Activated CD4-positive, alpha-beta T cell treated with anti-CD3 and anti-CD28 coated beads for 36 hours (primary cell): ENCODE measurements at regions of chrX and their contacts with region 1.

Region 1: DNA sequence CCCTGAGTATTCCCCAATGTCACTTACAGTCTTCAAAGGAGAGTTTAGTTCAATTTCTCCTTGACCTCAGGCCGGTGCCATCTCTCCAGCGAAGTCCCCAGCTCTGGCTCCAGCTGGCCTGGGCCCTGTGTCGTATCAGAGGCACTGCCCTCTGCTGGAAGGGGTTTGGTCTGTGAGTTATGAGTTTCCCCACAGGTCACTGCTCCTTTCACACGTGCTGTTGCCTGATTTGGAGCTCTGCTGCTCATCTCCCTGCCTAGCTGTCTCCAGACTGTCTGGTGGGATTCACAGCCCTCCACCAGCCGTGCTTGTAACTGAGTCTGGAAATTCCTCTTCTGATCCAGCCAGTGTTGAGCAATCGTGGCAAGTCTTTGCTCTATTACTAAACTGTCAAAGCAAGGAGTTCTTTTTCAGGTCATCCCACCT is at the start of gene RAP2C:
- DNase-seq: peak; percentile 76
- ATAC-seq: peak; percentile 33
- H3K4me3 Mint-ChIP-seq: peak within 1 kb of the TSS; percentile 87
- H3K27ac Mint-ChIP-seq: peak within 1 kb of the TSS; percentile 92
- H3K4me1 Mint-ChIP-seq: peaks cover 13% of the 10 kb centered on the region
- H3K27me3 Mint-ChIP-seq: no peaks in the 10 kb centered on the region
- total RNA-seq, gene RAP2C: 28.3 to 31.3 TPM

Region 2: DNA sequence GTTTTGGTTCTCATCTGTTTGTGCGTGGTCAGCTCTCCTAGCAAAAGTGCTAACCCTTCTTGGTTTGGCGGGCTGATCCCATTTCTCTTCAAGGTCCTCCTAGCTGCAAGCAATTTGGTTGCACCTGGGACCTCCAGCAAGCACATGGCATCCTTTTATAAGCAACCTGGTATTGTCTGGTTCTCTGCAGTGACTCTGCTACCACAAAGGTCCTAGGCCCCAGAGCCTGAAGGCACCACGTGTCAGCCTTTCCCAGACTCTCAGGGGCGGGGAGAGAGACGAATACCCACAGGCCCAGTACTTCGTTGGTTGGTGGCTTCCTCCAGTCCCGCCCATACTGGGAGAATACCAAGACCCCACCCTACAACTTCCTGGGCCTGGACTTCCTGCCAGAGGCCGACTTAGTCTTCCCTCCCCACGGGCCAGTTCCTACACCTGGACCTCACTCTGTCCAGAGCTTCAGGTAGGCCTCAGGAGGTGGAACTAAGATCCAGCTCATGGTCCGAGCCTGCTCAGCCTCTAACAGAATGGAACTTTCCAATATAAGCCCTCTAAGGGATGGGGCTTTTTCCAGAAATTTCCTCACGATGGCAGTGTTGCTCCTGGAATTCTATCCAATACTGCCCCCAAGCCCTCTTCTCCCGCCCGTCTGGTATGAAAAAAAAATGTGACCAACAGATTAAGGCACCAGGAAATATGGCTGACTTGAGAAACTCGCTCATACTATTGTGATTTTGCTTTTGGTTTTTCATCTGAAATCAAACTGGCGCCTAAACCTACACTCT is 388.8 kb before region 1 on chrX:
- CTCF ChIA-PET with region 1: interaction called, 7 read pairs
- POLR2A ChIA-PET with region 1: no interaction called
- intact Hi-C with region 1: loop called (anchors 1 to 5 kb)
- DNase-seq: peak; percentile 76
- ATAC-seq: peak; percentile 89
- H3K4me3 Mint-ChIP-seq: peak overlapping the region; percentile 80
- H3K27ac Mint-ChIP-seq: peak overlapping the region; percentile 86
- H3K4me1 Mint-ChIP-seq: peaks cover 25% of the 10 kb centered on the region
- H3K27me3 Mint-ChIP-seq: no peaks in the 10 kb centered on the region

Region 3: DNA sequence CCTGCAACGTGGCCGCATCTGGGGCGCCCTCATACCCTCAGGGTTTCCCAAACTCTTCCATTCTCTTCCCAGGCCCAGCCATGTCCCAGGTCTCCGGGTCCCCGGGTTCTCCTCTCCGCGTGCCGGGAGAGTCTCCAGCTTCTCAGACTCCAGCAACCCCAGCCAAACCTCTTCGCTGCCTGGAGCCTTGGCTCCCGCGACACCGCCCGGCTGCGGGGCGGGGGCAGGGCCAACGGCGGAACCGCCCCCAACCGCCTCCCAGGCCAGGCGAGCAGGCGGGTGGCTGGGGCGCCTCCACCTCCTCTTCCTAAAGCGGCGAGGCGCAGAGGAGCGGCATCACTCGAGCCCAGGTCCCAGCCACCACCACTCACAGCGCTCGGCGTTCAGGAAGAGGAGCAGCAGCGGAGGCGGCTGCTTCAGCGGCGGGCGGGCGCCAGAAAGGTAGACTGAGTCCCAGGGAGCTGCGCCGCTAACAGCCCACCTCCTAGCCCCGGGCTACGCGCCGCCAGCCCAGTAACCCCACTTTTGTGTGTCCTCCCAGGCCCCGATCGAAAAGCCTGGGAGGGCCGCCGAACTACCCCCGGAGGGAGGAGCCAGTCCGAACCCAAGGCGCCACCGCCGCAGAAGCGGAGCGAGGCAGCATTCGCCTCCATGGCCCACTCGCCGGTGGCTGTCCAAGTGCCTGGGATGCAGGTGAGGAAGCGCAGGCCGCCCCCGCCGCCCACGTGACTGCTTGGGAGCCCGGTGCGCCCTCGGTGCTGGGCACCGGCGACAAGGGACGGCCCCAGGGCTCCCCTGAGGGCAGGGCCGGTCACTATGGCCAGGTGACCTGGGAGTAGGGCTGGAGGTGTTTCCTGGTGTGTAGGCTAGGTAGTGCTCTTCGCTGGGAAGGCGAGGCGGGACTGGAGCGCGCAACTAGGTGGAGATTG is 196.1 kb before region 1 on chrX and contains the start of gene STK26:
- CTCF ChIA-PET with region 1: no interaction called
- POLR2A ChIA-PET with region 1: interaction called, 4 read pairs
- intact Hi-C with region 1: loop called (anchors 1 to 2 kb)
- DNase-seq: peak; percentile 87
- ATAC-seq: peak; percentile 82
- H3K4me3 Mint-ChIP-seq: peak within 1 kb of the TSS; percentile 88
- H3K27ac Mint-ChIP-seq: peak within 1 kb of the TSS; percentile 93
- H3K4me1 Mint-ChIP-seq: peaks cover 30% of the 10 kb centered on the region
- H3K27me3 Mint-ChIP-seq: no peaks in the 10 kb centered on the region
- total RNA-seq, gene STK26: 72.7 to 93.6 TPM

Region 4: GRCh38 chrX:132480581-132481203 is 261.3 kb after region 1 on chrX:
- CTCF ChIA-PET with region 1: interaction called, 5 read pairs
- POLR2A ChIA-PET with region 1: no interaction called
- intact Hi-C with region 1: loop called in 1 of 2 experiments (anchors 5 kb)
- DNase-seq: peak; percentile 50
- ATAC-seq: peak; percentile 81
- H3K4me3 Mint-ChIP-seq: peak overlapping the region; percentile 70
- H3K27ac Mint-ChIP-seq: peak overlapping the region; percentile 98
- H3K4me1 Mint-ChIP-seq: peaks cover 55% of the 10 kb centered on the region
- H3K27me3 Mint-ChIP-seq: no peaks in the 10 kb centered on the region

Region 5: DNA sequence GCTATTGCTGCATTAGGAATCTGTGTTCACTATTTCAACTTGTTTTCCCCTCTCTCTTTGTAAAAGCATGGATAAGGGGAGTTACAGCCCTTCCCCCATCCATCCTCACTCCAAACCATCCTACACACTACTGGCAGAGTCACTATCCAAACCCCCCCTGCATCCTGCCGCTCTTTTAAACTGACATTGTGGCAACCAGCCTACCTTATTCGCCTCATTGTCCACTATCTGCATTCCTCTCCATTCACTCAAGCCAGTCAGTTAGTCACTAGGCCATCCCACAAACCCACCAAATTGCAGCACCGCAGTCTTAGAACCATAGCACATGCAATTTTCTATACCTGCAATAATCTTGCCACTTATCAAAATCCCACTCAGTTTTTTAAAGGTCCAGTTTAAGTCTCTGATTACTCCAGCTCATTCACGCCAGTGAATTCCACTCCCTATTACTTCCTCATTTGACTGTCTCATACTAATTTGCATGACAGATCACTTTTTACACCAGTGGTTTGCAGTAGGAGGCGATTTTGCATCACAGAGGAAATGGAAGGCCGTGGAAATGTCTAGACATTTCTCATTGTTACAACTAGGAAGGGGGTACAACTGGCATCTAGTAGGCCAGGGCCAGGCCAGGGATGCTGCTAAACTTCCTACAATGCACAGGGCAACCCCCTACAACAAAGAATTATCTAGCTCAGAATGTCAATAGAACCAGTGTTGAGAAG is 557.3 kb after region 1 on chrX:
- CTCF ChIA-PET with region 1: no interaction called
- POLR2A ChIA-PET with region 1: no interaction called
- intact Hi-C with region 1: loop called in 1 of 2 experiments (anchors 5 kb)
- DNase-seq: no peak
- ATAC-seq: no peak
- H3K4me3 Mint-ChIP-seq: no peak overlapping the region
- H3K27ac Mint-ChIP-seq: no peak overlapping the region
- H3K4me1 Mint-ChIP-seq: peaks cover 27% of the 10 kb centered on the region
- H3K27me3 Mint-ChIP-seq: no peaks in the 10 kb centered on the region